Cardiac septum (tissue), 1 donor: ENCODE measurements at regions of chr1 and their contacts with region 1.

Region 1: DNA sequence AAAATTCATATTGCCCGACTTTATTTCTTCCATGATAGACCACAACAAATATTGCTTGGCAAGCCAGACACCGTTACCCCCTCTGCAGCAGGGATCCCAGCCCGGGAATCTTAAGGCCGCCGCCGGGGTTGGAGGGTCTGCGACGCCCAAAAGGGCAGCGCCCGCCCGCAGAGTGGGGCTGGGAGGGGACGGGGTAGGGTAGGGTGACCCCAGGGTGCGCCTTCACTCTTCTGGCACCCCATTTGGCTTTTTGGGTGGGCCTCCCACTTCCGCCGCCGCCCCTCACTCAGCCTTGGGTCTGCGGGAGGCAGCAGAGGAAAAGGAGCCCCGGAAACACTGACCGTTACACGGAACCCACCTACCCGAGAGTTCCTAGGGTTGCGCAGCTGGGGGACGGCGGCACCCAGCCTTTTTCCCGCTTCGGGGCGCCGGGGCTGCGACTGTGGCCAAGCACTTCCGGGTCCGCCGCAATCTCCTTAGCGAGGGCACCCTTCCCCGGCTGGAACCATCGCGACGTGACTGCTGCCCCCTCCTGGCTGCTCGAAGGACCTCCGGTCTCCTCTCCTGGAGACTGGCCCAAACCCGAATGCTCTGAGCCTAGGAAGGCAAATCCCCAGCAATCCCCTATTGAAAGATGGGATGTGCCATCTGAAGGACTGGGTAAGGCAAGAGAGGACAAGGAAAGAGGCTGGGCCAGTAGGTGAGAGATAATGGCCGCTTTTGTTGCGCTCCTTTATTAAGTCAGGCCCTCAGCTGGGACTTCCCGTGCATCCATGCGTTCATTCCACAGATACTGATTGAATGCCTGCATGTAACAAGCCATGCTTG is at the start of gene PIGC:
- DNase-seq: peak; percentile 97
- total RNA-seq, gene PIGC: 11.5 TPM

Region 2: DNA sequence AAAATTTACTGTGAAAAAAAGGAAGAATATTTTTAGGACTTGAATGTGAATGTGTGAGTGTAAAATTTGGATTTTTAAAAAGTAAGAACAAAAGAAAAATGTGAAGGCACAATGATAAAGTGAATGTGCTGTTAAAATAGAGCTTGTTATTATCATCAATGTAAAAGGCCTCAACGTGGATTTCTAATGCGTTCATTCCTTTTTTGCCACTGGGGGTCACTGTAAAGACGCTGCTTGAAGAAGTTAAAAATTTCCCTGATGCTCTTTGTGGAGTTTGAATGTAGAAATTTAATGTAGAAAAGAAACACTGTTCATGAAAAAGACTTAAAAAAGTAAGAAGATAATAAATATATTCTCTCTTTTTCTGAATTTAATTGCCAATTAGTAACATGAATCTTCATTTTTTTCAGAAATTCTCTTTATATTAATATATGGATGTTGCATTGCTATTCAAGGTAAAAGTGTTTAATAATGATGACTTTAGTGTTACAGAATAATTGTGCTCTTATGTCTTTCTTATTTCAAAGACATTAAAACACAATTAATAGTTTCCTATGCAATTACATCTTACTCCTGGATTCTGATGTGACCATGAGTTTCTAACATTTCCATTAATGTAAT is 441.0 kb before region 1 on chr1:
- intact Hi-C with region 1: loop called (anchors 10 kb)
- DNase-seq: no peak

Region 3: GRCh38 chr1:172532700-172533509 is 89.1 kb after region 1 on chr1 and contains the start of gene SUCO:
- intact Hi-C with region 1: loop called (anchors 2 kb)
- DNase-seq: peak; percentile 100
- total RNA-seq, gene SUCO: 27.4 TPM

Region 4: GRCh38 chr1:172697534-172698002 is 253.7 kb after region 1 on chr1:
- intact Hi-C with region 1: no loop called
- DNase-seq: no peak